ENCODE measurements at regions of chr11 and their contacts with region 1.

Region 1: DNA sequence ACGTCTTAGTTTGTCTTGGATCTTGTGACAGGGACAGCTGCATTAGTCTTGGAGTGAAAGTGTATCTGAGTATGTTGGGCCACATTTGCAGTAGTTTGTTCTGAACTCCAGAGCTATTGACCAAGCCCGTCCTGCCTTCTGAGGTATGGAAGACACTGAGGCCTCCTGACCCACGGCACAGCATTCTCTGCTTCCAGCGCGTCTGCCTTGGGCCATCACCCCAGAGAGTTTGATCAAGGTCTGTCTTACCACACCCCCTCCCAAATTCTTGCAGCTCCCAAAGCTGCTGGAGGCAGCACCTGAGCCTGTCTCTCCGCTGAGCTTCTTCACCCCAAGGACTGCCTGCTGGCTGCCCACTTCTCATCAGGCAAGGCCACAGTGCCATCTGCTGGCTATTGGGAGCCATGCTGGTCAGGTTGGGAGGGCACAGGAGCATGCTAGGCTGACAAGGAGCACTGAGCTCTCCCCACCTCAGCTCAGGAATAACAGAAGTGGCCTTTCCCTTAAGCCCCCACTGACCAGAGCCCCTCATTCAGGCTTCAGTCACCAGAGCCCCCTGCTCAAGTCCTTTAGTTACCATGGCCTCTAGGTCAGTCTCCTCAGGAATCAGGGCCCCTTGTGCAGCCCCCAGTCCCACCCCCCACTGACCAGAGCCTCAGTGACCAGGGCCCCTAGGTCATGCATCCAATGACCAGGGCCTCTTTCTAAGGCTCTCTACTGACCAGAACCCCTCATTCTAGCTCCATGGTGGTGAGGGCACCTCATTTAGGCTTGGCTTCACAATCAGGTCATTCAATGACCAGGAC is 27.2 kb upstream of the SMPD1 start:
- DNase-seq: peak; percentile 66
- ATAC-seq: peak; percentile 98
- H3K4me3 ChIP-seq: no peak overlapping the region
- H3K27ac ChIP-seq: no peak overlapping the region
- H3K4me1 ChIP-seq: no peaks in the 10 kb centered on the region
- H3K27me3 ChIP-seq: peaks cover 2% of the 10 kb centered on the region
- CTCF ChIP-seq: peak; percentile 99

Region 2: GRCh38 chr11:6022956-6023355 is 340.1 kb before region 1 on chr11:
- CTCF ChIA-PET with region 1: interaction called, 11 read pairs
- POLR2A ChIA-PET with region 1: no interaction called
- in situ Hi-C with region 1: no loop called
- intact Hi-C with region 1: loop called (anchors 2 kb)
- DNase-seq: peak; percentile 58
- ATAC-seq: peak; percentile 93
- H3K4me3 ChIP-seq: no peak overlapping the region
- H3K27ac ChIP-seq: no peak overlapping the region
- H3K4me1 ChIP-seq: no peaks in the 10 kb centered on the region
- H3K27me3 ChIP-seq: peaks cover 5% of the 10 kb centered on the region
- CTCF ChIP-seq: peak; percentile 71

Region 3: GRCh38 chr11:6298605-6299004 is 64.5 kb before region 1 on chr11:
- CTCF ChIA-PET with region 1: interaction called, 13 read pairs
- POLR2A ChIA-PET with region 1: no interaction called
- in situ Hi-C with region 1: no loop called
- intact Hi-C with region 1: no loop called
- DNase-seq: no peak
- ATAC-seq: peak; percentile 99
- H3K4me3 ChIP-seq: no peak overlapping the region
- H3K27ac ChIP-seq: no peak overlapping the region
- H3K4me1 ChIP-seq: no peaks in the 10 kb centered on the region
- H3K27me3 ChIP-seq: peaks cover 10% of the 10 kb centered on the region; the same call in 1 of the 2 replicates
- CTCF ChIP-seq: peak; percentile 98

Region 4: DNA sequence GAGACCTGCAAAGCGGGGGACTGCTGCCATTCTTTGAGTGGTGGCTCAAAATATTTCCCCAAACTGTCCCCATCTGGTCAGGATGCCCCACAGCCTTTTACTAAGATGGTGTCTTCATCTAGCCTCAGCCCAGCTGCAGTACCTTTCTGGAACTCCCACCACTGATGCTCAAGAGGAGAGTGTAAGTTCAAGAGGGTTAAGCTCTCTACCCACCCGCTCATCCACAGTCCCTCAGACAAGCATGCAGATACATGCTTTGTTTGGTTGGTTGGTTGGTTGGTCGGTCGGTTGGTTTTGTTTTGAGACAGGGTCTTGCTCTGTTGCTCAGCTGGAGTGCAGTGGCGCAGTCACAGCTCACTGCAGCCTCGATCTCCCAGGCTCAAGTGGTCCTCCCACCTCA is 28.3 kb before region 1 on chr11:
- CTCF ChIA-PET with region 1: interaction called, 10 read pairs
- POLR2A ChIA-PET with region 1: no interaction called
- in situ Hi-C with region 1: no loop called
- intact Hi-C with region 1: no loop called
- DNase-seq: no peak
- ATAC-seq: no peak; the same call in 1 of the 2 replicates
- H3K4me3 ChIP-seq: no peak overlapping the region
- H3K27ac ChIP-seq: no peak overlapping the region
- H3K4me1 ChIP-seq: no peaks in the 10 kb centered on the region
- H3K27me3 ChIP-seq: no peaks in the 10 kb centered on the region
- CTCF ChIP-seq: no peak

Region 5: DNA sequence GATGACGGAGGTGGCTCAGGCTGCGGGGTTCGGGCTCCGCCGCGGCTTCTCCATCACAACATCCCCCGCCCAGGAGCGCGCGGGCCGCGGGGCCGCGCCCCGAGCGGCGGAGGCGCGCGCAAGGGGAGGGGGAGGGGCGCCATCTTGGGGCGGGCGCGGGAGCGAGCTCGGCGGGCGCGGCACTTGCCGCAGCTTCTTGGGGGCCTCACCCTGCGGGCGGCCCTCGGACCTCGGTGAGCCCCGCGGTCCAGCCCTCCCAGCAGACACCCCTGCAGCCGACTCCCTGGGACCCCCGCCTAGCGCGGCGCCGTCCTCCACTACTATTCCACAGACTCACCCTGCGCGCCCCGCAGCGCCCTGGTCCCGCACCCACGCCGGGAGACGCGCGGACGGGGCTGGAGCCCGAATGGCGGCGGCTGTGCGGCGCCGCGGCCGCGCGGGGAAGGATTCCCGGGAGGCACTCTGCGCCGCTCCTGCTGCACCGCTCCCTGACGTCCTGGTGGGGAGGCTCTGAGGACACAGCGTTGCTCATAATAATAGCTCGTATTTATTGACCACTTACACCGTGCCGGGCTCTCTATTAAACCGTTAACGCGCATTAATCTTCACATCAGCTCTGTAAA is 56.0 kb after region 1 on chr11 and contains the start of gene APBB1:
- CTCF ChIA-PET with region 1: no interaction called
- POLR2A ChIA-PET with region 1: no interaction called
- in situ Hi-C with region 1: no loop called
- intact Hi-C with region 1: no loop called
- DNase-seq: no peak
- ATAC-seq: peak; percentile 86
- H3K4me3 ChIP-seq: peak within 1 kb of the TSS; percentile 59 to 62
- H3K27ac ChIP-seq: no peak within 1 kb of the TSS
- H3K4me1 ChIP-seq: peaks cover 4% of the 10 kb centered on the region
- H3K27me3 ChIP-seq: peaks cover 45% of the 10 kb centered on the region
- CTCF ChIP-seq: no peak; the same call in 1 of the 2 replicates
- total RNA-seq, gene APBB1: 9.6 TPM